B cell (primary cell): ENCODE measurements at regions of chr1 and their contacts with region 1.

Region 1: GRCh38 chr1:209565759-209566678 is 17.5 kb upstream of the CAMK1G start:
- DNase-seq: peak; percentile 63
- ATAC-seq: no peak
- H3K4me3 ChIP-seq: no peak overlapping the region
- H3K4me3 Mint-ChIP-seq: no peak overlapping the region
- H3K27ac ChIP-seq: no peak overlapping the region
- H3K27ac Mint-ChIP-seq: no peak overlapping the region
- H3K4me1 ChIP-seq: peaks cover 4 to 5% of the 10 kb centered on the region in 2 donors
- H3K4me1 Mint-ChIP-seq: peaks cover 5% of the 10 kb centered on the region
- H3K27me3 ChIP-seq: peaks cover 0 to 20% (median 11%) of the 10 kb centered on the region in 4 experiments
- H3K27me3 Mint-ChIP-seq: peaks cover 39% of the 10 kb centered on the region
- CTCF ChIP-seq: peak; percentile 75

Region 2: GRCh38 chr1:209480345-209480744 is 85.7 kb before region 1 on chr1:
- CTCF ChIA-PET with region 1: no interaction called
- POLR2A ChIA-PET with region 1: no interaction called
- intact Hi-C with region 1: no loop called
- DNase-seq: no peak
- ATAC-seq: no peak
- H3K4me3 ChIP-seq: no peak overlapping the region
- H3K4me3 Mint-ChIP-seq: no peak overlapping the region
- H3K27ac ChIP-seq: no peak overlapping the region
- H3K27ac Mint-ChIP-seq: no peak overlapping the region
- H3K4me1 ChIP-seq: no peaks in the 10 kb centered on the region
- H3K4me1 Mint-ChIP-seq: no peaks in the 10 kb centered on the region
- H3K27me3 ChIP-seq: peaks cover 0 to 4% (median 0%) of the 10 kb centered on the region in 4 experiments
- H3K27me3 Mint-ChIP-seq: peaks cover 12% of the 10 kb centered on the region
- CTCF ChIP-seq: no peak

Region 3: DNA sequence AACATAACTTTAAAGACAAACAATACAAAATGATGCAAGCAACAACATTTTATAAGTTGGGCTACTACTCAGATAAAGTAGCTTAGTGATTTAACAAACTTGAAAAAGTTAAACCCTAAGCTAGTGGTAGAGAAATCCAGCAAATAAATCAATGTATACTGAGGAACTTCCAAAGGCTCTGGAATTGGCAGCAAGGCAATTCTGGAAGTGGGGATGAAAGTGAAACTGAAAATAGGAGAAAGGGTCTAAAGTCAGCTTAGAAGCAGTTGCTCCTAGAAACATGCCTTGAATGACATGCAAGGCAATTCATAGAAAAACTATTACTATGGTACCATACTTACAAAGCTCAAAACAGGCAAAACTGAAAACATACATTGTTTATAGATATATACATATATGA is 72.5 kb before region 1 on chr1:
- CTCF ChIA-PET with region 1: no interaction called
- POLR2A ChIA-PET with region 1: no interaction called
- intact Hi-C with region 1: no loop called
- DNase-seq: no peak
- ATAC-seq: no peak
- H3K4me3 ChIP-seq: no peak overlapping the region
- H3K4me3 Mint-ChIP-seq: no peak overlapping the region
- H3K27ac ChIP-seq: no peak overlapping the region
- H3K27ac Mint-ChIP-seq: no peak overlapping the region
- H3K4me1 ChIP-seq: no peaks in the 10 kb centered on the region
- H3K4me1 Mint-ChIP-seq: no peaks in the 10 kb centered on the region
- H3K27me3 ChIP-seq: peaks cover 0 to 6% (median 0%) of the 10 kb centered on the region in 4 experiments
- H3K27me3 Mint-ChIP-seq: no peaks in the 10 kb centered on the region
- CTCF ChIP-seq: no peak

Region 4: GRCh38 chr1:209549443-209550205 is 16.4 kb before region 1 on chr1:
- CTCF ChIA-PET with region 1: interaction called, 16 read pairs
- POLR2A ChIA-PET with region 1: no interaction called
- intact Hi-C with region 1: no loop called
- DNase-seq: no peak
- ATAC-seq: no peak
- H3K4me3 ChIP-seq: no peak overlapping the region
- H3K4me3 Mint-ChIP-seq: no peak overlapping the region
- H3K27ac ChIP-seq: no peak overlapping the region
- H3K27ac Mint-ChIP-seq: no peak overlapping the region
- H3K4me1 ChIP-seq: no peaks in the 10 kb centered on the region
- H3K4me1 Mint-ChIP-seq: no peaks in the 10 kb centered on the region
- H3K27me3 ChIP-seq: peaks cover 0 to 9% (median 0%) of the 10 kb centered on the region in 4 experiments
- H3K27me3 Mint-ChIP-seq: peaks cover 14% of the 10 kb centered on the region
- CTCF ChIP-seq: no peak

Region 5: DNA sequence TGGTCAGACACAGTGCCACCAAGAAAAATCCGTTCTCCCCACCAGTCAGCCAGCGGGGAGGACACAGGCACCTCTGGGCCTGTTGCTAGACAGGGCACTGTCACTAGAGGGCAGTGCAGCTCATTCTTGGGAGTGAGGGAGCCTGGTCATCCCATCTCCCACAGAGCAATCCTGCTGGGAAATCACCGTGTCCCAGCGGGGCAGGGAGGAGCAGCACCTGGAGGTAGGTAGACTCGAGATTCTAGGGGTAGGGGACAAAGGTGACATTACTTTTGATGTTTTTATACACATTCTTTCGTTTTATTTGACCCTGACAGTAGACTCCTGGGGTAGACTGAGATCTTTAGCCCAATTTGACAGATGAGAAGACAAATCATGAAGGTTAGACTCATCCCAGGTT is 10.8 kb after region 1 on chr1:
- CTCF ChIA-PET with region 1: interaction called, 31 read pairs
- POLR2A ChIA-PET with region 1: no interaction called
- intact Hi-C with region 1: no loop called
- DNase-seq: peak; percentile 56
- ATAC-seq: peak; percentile 51
- H3K4me3 ChIP-seq: no peak overlapping the region
- H3K4me3 Mint-ChIP-seq: no peak overlapping the region
- H3K27ac ChIP-seq: no peak overlapping the region
- H3K27ac Mint-ChIP-seq: no peak overlapping the region
- H3K4me1 ChIP-seq: no peaks in the 10 kb centered on the region
- H3K4me1 Mint-ChIP-seq: no peaks in the 10 kb centered on the region
- H3K27me3 ChIP-seq: peaks cover 0 to 2% (median 0%) of the 10 kb centered on the region in 4 experiments
- H3K27me3 Mint-ChIP-seq: peaks cover 31% of the 10 kb centered on the region
- CTCF ChIP-seq: peak; percentile 84